Endothelial cell of umbilical vein (primary cell): ENCODE measurements at regions of chr16 and their contacts with region 1.

Region 1: GRCh38 chr16:24253192-24253591 is 2.9 kb upstream of the CACNG3 start:
- DNase-seq: peak; percentile 43
- H3K4me3 ChIP-seq: no peak overlapping the region
- H3K27ac ChIP-seq: no peak overlapping the region
- H3K4me1 ChIP-seq: no peaks in the 10 kb centered on the region
- H3K27me3 ChIP-seq: no peaks in the 10 kb centered on the region
- CTCF ChIP-seq: peak; percentile 52 to 75
- POLR2A ChIP-seq: no peak

Region 2: GRCh38 chr16:23999663-24000062 is 253.5 kb before region 1 on chr16:
- CTCF ChIA-PET with region 1: no interaction called
- POLR2A ChIA-PET with region 1: no interaction called
- dilution Hi-C with region 1: no loop called
- intact Hi-C with region 1: no loop called
- DNase-seq: no peak
- H3K4me3 ChIP-seq: no peak overlapping the region
- H3K27ac ChIP-seq: no peak overlapping the region
- H3K4me1 ChIP-seq: no peaks in the 10 kb centered on the region
- H3K27me3 ChIP-seq: no peaks in the 10 kb centered on the region
- CTCF ChIP-seq: no peak
- POLR2A ChIP-seq: no peak

Region 3: DNA sequence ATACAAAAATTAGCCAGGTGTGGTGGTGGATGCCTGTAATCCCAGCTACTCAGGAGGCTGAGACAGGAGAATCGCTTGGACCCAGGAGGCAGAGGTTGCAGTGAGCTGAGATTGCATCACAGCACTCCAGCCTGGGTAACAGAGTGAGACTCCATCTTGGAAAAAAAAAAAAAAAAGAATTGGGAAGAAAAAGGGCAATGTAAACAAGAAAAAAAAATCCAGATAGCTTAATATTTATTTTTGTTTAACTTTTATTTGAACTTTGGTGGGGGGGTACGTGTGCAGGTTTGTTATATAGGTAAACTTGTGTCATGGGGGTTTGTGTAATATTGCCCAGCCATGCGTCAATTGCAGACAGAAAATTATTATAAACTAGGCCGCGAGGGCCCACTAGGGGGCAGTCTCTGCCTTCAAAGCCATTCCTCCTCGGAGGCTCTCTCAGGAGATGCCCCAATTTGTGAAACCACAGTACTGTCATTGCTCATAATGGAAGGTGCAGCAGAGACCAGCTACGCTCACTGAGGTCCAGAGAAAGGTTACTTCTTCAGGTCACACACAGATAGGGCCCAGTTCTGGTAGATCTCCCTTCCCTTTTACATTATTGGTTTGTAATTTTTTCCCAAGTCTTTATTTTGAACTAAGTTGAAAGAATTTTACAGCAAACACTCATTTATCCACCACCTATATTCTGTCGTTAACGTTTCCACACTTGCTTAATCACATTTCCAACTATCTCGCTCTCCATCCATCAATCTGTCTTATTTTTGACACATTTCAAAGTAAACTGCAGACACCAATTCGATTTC is 211.2 kb before region 1 on chr16:
- CTCF ChIA-PET with region 1: interaction called, 94 read pairs
- POLR2A ChIA-PET with region 1: no interaction called
- dilution Hi-C with region 1: no loop called
- intact Hi-C with region 1: loop called (anchors 1 kb)
- DNase-seq: peak; percentile 53
- H3K4me3 ChIP-seq: no peak overlapping the region
- H3K27ac ChIP-seq: no peak overlapping the region
- H3K4me1 ChIP-seq: no peaks in the 10 kb centered on the region
- H3K27me3 ChIP-seq: no peaks in the 10 kb centered on the region
- CTCF ChIP-seq: peak; percentile 71 to 77
- POLR2A ChIP-seq: no peak

Region 4: DNA sequence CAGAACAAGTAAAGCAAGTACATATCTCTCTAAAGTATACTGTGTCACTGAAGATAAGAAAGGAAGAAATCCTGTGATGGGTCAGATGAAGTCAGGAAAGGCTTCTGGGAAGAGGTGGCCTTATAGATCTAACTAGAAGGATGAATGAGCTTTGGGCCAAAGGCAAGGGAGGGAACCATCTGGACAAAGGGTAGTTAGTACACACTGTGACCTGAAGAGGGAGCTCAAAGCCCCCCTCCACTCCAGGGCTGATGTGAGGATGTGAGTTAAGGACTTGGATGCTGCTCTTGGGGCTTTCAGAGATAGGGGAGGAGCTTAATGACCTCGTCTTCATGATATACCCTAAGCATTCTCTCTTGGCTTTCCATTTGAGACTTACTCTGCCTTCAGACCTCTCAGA is 182.3 kb before region 1 on chr16:
- CTCF ChIA-PET with region 1: interaction called, 512 read pairs
- POLR2A ChIA-PET with region 1: no interaction called
- dilution Hi-C with region 1: loop called (anchors 25 kb)
- intact Hi-C with region 1: loop called (anchors 1 kb)
- DNase-seq: peak; percentile 55
- H3K4me3 ChIP-seq: no peak overlapping the region
- H3K27ac ChIP-seq: no peak overlapping the region
- H3K4me1 ChIP-seq: no peaks in the 10 kb centered on the region
- H3K27me3 ChIP-seq: no peaks in the 10 kb centered on the region
- CTCF ChIP-seq: peak; percentile 63 to 75
- POLR2A ChIP-seq: no peak

Region 5: GRCh38 chr16:24139282-24139681 is 113.9 kb before region 1 on chr16:
- CTCF ChIA-PET with region 1: interaction called, 13 read pairs
- POLR2A ChIA-PET with region 1: no interaction called
- dilution Hi-C with region 1: no loop called
- intact Hi-C with region 1: no loop called
- DNase-seq: no peak
- H3K4me3 ChIP-seq: no peak overlapping the region
- H3K27ac ChIP-seq: no peak overlapping the region
- H3K4me1 ChIP-seq: no peaks in the 10 kb centered on the region
- H3K27me3 ChIP-seq: peaks cover 0 to 2% of the 10 kb centered on the region in 2 experiments
- CTCF ChIP-seq: no peak
- POLR2A ChIP-seq: no peak

Region 6: GRCh38 chr16:24208710-24209109 is 44.5 kb before region 1 on chr16:
- CTCF ChIA-PET with region 1: no interaction called
- POLR2A ChIA-PET with region 1: no interaction called
- dilution Hi-C with region 1: no loop called
- intact Hi-C with region 1: no loop called
- DNase-seq: no peak
- H3K4me3 ChIP-seq: no peak overlapping the region
- H3K27ac ChIP-seq: no peak overlapping the region
- H3K4me1 ChIP-seq: no peaks in the 10 kb centered on the region
- H3K27me3 ChIP-seq: no peaks in the 10 kb centered on the region
- CTCF ChIP-seq: no peak
- POLR2A ChIP-seq: no peak

Region 7: DNA sequence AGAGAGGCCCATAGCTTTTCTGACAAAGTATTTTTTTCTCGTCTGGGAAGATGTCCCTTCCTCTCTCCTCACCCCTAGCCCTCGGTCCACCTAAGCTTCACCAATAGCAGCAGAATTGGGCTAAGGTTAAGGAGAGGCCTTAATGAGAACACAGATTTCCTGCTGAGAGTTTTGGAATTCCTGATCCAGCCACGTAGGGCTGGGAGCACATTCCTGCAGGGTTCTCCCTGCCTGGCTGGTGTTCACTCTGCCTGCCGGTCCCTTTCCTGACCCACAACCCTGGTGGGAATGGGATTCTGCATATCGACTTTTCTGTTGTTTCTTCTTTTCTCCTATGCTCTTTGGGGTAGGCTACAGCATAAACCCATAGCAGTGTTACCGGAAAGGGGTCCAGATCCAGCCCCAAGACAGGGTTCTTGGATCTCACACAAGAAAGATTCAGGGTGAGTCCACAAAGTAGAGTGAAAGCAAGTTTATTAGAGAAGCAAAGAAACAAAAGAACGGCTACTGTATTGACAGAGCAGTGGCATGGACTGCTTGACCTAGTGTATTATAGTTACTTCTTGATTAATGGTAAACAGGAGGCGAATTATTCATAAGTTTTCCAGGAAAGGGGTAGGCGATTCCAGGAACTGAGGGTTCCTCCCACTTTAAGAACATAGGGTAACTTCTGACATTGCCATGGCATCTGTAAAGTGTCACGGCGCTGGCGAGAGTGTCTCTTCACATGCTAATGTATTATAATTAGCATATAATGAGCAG is 95.9 kb after region 1 on chr16:
- CTCF ChIA-PET with region 1: no interaction called
- POLR2A ChIA-PET with region 1: no interaction called
- dilution Hi-C with region 1: no loop called
- intact Hi-C with region 1: no loop called
- DNase-seq: no peak
- H3K4me3 ChIP-seq: no peak overlapping the region
- H3K27ac ChIP-seq: no peak overlapping the region
- H3K4me1 ChIP-seq: no peaks in the 10 kb centered on the region
- H3K27me3 ChIP-seq: no peaks in the 10 kb centered on the region
- CTCF ChIP-seq: no peak
- POLR2A ChIP-seq: no peak

Region 8: DNA sequence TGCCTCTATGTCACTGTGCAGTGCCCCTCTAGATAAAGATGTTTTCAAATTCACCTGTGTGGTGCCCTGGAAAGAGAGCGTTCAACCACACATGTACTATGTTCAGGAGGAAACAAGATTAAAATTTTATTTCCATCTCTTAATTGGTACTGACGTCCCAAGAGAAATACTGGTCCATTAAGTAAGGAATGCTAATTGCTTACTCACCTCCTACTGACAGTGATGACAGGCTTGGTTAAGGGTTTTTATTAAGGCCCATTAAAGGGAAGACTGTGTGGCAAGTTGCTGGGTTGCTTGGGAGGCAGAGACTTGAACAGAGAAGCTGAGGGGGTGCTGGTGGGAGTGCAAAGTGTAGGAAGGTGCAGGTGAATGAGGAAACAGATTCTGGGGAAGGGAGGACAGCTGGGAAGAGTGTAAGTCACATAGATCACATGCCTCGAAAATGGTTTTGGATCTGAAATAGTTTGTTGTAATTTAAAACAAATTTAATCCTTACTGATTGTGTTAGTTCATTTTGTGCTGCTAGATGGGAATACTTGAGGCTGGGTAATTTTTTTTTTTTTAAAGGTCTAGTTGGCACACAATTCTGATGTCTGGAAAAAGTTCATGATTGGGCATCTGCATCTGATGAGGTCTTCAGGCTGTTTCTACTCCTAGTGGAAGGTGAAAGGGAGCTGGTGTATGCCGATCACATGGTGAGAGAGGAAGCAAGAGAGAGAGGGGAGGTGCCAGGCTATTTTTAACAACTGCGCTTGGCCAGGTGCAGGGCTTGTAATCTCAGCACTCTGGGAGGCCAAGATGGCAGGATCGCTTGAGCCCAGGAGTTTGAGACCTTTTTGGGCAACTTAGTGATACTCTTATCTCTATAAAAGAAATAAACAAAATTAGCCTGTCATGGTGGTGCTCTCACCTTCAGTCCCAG is 143.4 kb after region 1 on chr16:
- CTCF ChIA-PET with region 1: no interaction called
- POLR2A ChIA-PET with region 1: no interaction called
- dilution Hi-C with region 1: no loop called
- intact Hi-C with region 1: no loop called
- DNase-seq: no peak
- H3K4me3 ChIP-seq: no peak overlapping the region
- H3K27ac ChIP-seq: no peak overlapping the region
- H3K4me1 ChIP-seq: no peaks in the 10 kb centered on the region
- H3K27me3 ChIP-seq: no peaks in the 10 kb centered on the region
- CTCF ChIP-seq: no peak
- POLR2A ChIP-seq: no peak

Region 9: GRCh38 chr16:24499193-24499814 is 246.1 kb after region 1 on chr16:
- CTCF ChIA-PET with region 1: interaction called, 34 read pairs
- POLR2A ChIA-PET with region 1: no interaction called
- dilution Hi-C with region 1: no loop called
- intact Hi-C with region 1: loop called (anchors 1 kb)
- DNase-seq: peak; percentile 13
- H3K4me3 ChIP-seq: no peak overlapping the region
- H3K27ac ChIP-seq: no peak overlapping the region
- H3K4me1 ChIP-seq: no peaks in the 10 kb centered on the region
- H3K27me3 ChIP-seq: no peaks in the 10 kb centered on the region
- CTCF ChIP-seq: peak; percentile 39 to 42
- POLR2A ChIP-seq: no peak